CD8-positive, alpha-beta memory T cell (primary cell): ENCODE measurements at regions of chr20 and their contacts with region 1.

Region 1: DNA sequence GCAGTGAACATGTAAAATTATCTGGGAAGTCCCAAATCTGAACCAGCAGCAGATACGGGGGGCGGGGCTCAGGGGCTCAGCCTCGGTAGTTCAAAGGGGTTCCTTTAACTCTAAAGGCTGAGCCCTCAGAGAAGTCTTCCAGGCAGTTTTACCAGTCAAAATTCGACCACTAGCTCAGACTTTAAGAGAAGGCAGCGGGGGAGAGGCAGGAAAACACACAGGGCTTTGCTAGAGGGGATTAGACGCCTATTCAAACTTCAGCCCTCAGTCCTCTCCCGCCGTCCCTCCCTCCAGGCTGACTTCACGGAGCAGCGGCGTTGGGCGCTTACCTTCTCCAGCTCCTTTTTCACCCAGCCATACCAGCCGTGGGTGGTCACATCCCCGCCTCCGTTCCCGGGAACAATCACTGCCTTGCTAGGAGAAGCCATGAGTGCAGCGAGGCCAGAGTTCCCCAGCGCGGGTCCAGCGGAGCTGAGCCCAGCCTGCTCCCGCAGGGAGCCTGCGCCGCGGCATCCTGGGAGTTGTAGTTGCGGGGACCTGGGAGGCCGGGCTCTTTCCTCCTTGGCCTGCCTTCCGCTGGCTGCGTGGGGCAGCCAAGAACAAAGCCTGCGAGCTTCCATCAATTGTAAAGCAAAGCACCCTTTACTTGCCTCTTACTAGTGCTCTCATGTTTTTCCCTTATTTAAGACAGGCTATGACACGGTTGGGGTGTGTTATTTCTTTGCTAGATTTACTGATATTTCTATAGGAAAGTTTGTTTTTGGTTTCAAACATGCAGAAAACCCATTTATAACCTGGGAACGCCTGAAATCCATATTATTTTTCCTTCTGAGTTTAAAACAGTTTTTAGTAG is at the start of gene RBBP9:
- DNase-seq: peak; percentile 59 to 75 (median 70)
- H3K4me3 ChIP-seq: peak within 1 kb of the TSS; percentile 82
- H3K4me3 Mint-ChIP-seq: peak within 1 kb of the TSS; percentile 94 to 99 (median 98)
- H3K27ac ChIP-seq: peak within 1 kb of the TSS; percentile 51
- H3K27ac Mint-ChIP-seq: peak within 1 kb of the TSS; percentile 33 to 97 (median 95)
- H3K4me1 ChIP-seq: peaks cover 13% of the 10 kb centered on the region
- H3K4me1 Mint-ChIP-seq: peaks cover 17 to 21% (median 19%) of the 10 kb centered on the region in 3 donors
- H3K27me3 ChIP-seq: no peaks in the 10 kb centered on the region
- H3K27me3 Mint-ChIP-seq: peaks cover 0 to 3% of the 10 kb centered on the region in 2 donors
- total RNA-seq, gene RBBP9: 18.1 to 20.4 TPM

Region 2: GRCh38 chr20:18466894-18467730 is 29.9 kb before region 1 on chr20 and contains the starts of genes DZANK1 and POLR3F:
- CTCF ChIA-PET with region 1: interaction called, 3 read pairs
- POLR2A ChIA-PET with region 1: interaction called, 11 read pairs
- DNase-seq: peak; percentile 87 to 94 (median 91)
- H3K4me3 ChIP-seq: peak within 1 kb of the TSS; percentile 91
- H3K4me3 Mint-ChIP-seq: peak within 1 kb of the TSS; percentile 87 to 97 (median 96)
- H3K27ac ChIP-seq: peak within 1 kb of the TSS; percentile 79
- H3K27ac Mint-ChIP-seq: peak within 1 kb of the TSS; percentile 95 to 98 (median 98)
- H3K4me1 ChIP-seq: peaks cover 11% of the 10 kb centered on the region
- H3K4me1 Mint-ChIP-seq: peaks cover 28 to 46% (median 38%) of the 10 kb centered on the region in 3 donors
- H3K27me3 ChIP-seq: no peaks in the 10 kb centered on the region
- H3K27me3 Mint-ChIP-seq: peaks cover 0 to 3% of the 10 kb centered on the region in 2 donors
- total RNA-seq, gene DZANK1: 2.8 to 3.1 TPM
- total RNA-seq, gene POLR3F: 17.3 to 18.0 TPM

Region 3: GRCh38 chr20:18515973-18516372 is 19.0 kb after region 1 on chr20:
- CTCF ChIA-PET with region 1: no interaction called
- POLR2A ChIA-PET with region 1: no interaction called
- DNase-seq: no peak
- H3K4me3 ChIP-seq: no peak overlapping the region
- H3K4me3 Mint-ChIP-seq: peak overlapping the region in 2 of 7 donors; percentile 0 to 30
- H3K27ac ChIP-seq: no peak overlapping the region
- H3K27ac Mint-ChIP-seq: peak overlapping the region in 4 of 8 donors; percentile 22 to 84 (median 59)
- H3K4me1 ChIP-seq: no peaks in the 10 kb centered on the region
- H3K4me1 Mint-ChIP-seq: peaks cover 15 to 47% (median 43%) of the 10 kb centered on the region in 3 donors
- H3K27me3 ChIP-seq: no peaks in the 10 kb centered on the region
- H3K27me3 Mint-ChIP-seq: no peaks in the 10 kb centered on the region